Heart right ventricle (tissue), 16 donors: ENCODE measurements at regions of chr5 and their contacts with region 1.

Region 1: DNA sequence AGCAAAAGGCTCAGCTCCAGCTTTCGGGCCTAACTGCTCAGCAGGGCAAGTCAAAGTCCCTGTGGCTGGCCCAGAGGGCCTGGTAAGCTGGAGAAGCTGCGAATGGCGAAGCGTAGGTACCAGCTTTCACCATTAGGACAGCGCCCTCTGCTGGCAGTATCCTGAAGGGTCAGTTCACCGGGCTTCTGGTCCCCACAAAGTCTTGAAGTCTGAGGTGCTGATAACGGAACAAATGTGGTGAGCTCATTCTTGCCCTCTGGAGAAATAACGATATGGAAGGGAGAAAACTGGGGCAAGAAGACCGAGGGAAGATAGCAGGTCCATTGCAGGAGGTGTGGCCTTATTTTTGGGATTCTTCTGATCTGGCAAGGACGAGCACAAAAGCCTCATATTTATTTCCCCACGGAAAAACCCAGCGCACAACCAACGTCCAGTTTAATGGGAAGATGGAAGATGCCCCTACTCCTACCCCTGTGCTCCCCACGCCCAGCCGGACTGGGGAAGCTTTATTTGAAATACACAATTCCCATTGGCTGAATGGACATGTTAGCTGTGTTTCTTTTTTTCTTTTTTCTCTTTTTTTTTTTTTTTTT is 7.2 kb downstream of the SOWAHA start:
- DNase-seq: peak; percentile 88 to 91
- ATAC-seq: peak; percentile 68 to 91 (median 85)
- H3K4me3 ChIP-seq: peak overlapping the region in 2 of 10 donors; percentile 13 to 21
- H3K27ac ChIP-seq: no peak overlapping the region
- H3K4me1 ChIP-seq: peaks cover 0 to 18% (median 8%) of the 10 kb centered on the region in 9 donors
- H3K27me3 ChIP-seq: peaks cover 0 to 49% (median 3%) of the 10 kb centered on the region in 7 donors
- CTCF ChIP-seq: peak; percentile 87 to 93 (median 92)

Region 2: GRCh38 chr5:131899692-131900091 is 920.6 kb before region 1 on chr5:
- intact Hi-C with region 1: no loop called
- DNase-seq: no peak
- ATAC-seq: no peak
- H3K4me3 ChIP-seq: no peak overlapping the region
- H3K27ac ChIP-seq: no peak overlapping the region
- H3K4me1 ChIP-seq: no peaks in the 10 kb centered on the region
- H3K27me3 ChIP-seq: no peaks in the 10 kb centered on the region
- CTCF ChIP-seq: no peak

Region 3: DNA sequence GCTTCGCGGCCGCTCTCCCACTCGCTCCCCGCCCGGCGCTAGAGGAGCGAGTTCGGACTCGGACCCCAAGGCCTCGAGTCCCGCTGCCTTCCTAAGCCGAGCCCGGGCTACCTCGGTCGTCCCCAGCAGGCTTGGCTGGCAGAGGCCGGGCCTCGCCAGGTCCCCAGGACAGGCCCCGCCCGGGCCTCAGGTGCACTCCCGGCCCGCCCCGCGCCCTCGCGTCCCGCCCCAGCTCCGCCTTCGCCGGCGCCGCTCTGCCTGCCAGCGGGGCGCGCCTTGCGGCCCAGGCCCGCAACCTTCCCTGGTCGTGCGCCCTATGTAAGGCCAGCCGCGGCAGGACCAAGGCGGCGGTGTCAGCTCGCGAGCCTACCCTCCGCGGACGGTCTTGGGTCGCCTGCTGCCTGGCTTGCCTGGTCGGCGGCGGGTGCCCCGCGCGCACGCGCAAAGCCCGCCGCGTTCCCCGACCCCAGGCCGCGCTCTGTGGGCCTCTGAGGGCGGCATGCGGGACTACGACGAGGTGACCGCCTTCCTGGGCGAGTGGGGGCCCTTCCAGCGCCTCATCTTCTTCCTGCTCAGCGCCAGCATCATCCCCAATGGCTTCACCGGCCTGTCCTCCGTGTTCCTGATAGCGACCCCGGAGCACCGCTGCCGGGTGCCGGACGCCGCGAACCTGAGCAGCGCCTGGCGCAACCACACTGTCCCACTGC is 450.6 kb before region 1 on chr5 and contains the start of gene SLC22A5:
- intact Hi-C with region 1: loop called in 1 of 10 experiments (anchors 10 kb)
- DNase-seq: peak in 1 of 2 donors; percentile 73
- ATAC-seq: peak; percentile 81 to 87 (median 86)
- H3K4me3 ChIP-seq: peak within 1 kb of the TSS; percentile 51 to 82 (median 72)
- H3K27ac ChIP-seq: peak within 1 kb of the TSS; percentile 70 to 92 (median 90)
- H3K4me1 ChIP-seq: peaks cover 3 to 55% (median 21%) of the 10 kb centered on the region in 9 donors
- H3K27me3 ChIP-seq: no peaks in the 10 kb centered on the region
- CTCF ChIP-seq: no peak
- total RNA-seq, gene SLC22A5: 10.3 to 36.8 (median 12.5) TPM

Region 4: GRCh38 chr5:132526290-132526973 is 293.8 kb before region 1 on chr5:
- intact Hi-C with region 1: loop called in 6 of 10 experiments (anchors 5 to 10 kb)
- DNase-seq: peak; percentile 9 to 31
- ATAC-seq: peak; percentile 38 to 88 (median 74)
- H3K4me3 ChIP-seq: no peak overlapping the region
- H3K27ac ChIP-seq: no peak overlapping the region
- H3K4me1 ChIP-seq: peaks cover 0 to 6% (median 3%) of the 10 kb centered on the region in 9 donors
- H3K27me3 ChIP-seq: no peaks in the 10 kb centered on the region
- CTCF ChIP-seq: peak; percentile 66 to 89 (median 80)

Region 5: DNA sequence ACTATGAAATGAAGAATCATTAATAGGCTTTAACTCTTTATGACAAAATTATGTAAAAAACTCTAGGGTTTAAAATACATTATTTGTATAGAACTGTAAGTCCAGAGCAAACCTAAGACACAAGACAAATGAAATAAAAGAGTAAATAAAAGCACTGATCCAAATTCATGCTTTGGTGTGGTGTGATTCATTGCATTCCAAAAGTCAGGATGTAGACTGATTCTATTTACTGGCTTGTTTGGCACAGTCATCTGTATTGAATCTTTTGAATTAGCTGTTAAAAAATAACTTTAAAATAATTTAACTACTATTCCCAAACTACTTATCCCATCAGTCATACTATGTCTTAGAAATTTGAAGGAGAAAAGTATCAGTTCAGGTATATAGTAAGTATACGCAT is 115.4 kb before region 1 on chr5:
- intact Hi-C with region 1: no loop called
- DNase-seq: no peak
- ATAC-seq: no peak
- H3K4me3 ChIP-seq: no peak overlapping the region
- H3K27ac ChIP-seq: no peak overlapping the region
- H3K4me1 ChIP-seq: no peaks in the 10 kb centered on the region
- H3K27me3 ChIP-seq: no peaks in the 10 kb centered on the region
- CTCF ChIP-seq: no peak

Region 6: DNA sequence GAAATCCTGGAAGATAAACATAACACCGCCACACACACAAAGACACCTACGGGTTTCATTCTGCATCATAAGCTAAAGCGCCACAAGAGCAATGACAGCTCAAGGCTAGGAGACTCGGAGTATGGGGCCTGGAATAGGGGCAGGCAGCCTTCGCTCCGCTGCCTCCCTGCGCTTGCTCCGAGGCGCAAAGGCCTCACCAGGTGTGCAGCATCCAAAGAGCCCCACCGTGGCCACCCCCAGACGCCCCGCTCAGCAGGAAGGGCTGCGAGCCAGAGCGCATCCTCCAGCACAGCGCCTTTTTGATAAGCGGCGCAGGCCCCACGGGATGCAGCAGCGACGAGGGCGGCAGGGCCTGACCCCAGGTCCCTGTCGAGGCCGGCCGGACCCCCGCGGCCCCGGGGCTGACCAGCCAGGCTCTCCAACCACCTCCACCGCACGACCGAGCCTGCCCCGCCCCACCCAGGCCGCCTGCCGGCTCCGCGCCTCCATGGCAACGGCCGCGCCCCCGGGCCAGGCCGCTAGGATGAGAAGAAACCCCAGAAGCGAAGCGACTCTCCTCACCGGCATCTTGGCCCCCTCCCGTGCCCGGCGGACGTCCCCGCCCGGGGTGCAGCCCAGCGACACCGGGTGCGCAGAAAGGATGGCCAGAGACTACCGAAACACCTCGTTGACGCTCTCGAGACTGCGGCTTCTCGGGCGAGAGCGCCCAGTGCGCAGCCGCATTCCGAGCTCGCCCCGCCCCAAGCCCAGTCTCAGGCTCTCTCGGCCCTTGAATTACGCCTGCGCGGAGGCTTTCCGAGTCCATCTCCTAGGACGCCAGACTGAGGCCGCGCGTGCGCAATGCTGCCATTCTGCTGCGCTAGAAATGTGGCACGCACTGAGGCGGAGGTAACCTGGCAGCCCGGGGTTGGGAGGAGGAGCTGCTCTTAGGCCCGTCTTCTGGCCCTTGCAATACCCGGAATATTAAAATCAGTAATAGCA is 83.1 kb before region 1 on chr5 and contains the start of gene KIF3A:
- intact Hi-C with region 1: loop called in 1 of 10 experiments (anchors 5 kb)
- DNase-seq: peak; percentile 95 to 99
- ATAC-seq: peak; percentile 99 to 100 (median 100)
- H3K4me3 ChIP-seq: peak within 1 kb of the TSS; percentile 63 to 99 (median 84)
- H3K27ac ChIP-seq: peak within 1 kb of the TSS in 9 of 10 donors; percentile 50 to 82 (median 72)
- H3K4me1 ChIP-seq: peaks cover 0 to 21% (median 17%) of the 10 kb centered on the region in 9 donors
- H3K27me3 ChIP-seq: peaks cover 0 to 11% (median 0%) of the 10 kb centered on the region in 7 donors
- CTCF ChIP-seq: peak in 2 of 9 donors; percentile 26 to 35
- total RNA-seq, gene KIF3A: 10.1 to 18.6 (median 13.1) TPM

Region 7: GRCh38 chr5:132746954-132747615 is 73.2 kb before region 1 on chr5 and contains the start of gene CCNI2:
- intact Hi-C with region 1: loop called in 5 of 10 experiments (anchors 5 to 10 kb)
- DNase-seq: peak in 1 of 2 donors; percentile 37
- ATAC-seq: peak; percentile 15 to 76 (median 54)
- H3K4me3 ChIP-seq: peak within 1 kb of the TSS; percentile 1 to 58 (median 52)
- H3K27ac ChIP-seq: peak within 1 kb of the TSS in 1 of 10 donors; percentile 33
- H3K4me1 ChIP-seq: peaks cover 4 to 14% (median 9%) of the 10 kb centered on the region in 9 donors
- H3K27me3 ChIP-seq: peaks cover 0 to 62% (median 33%) of the 10 kb centered on the region in 7 donors
- CTCF ChIP-seq: peak in 6 of 9 donors; percentile 10 to 42 (median 26)
- total RNA-seq, gene CCNI2: 0.09 to 0.75 (median 0.22) TPM in 4 of 10 donors, not detected in the others

Region 8: GRCh38 chr5:132753135-132753987 is 66.9 kb before region 1 on chr5:
- intact Hi-C with region 1: loop called in 9 of 10 experiments (anchors 5 to 10 kb)
- DNase-seq: no peak
- ATAC-seq: peak in 3 of 8 donors; percentile 6 to 41 (median 21)
- H3K4me3 ChIP-seq: no peak overlapping the region
- H3K27ac ChIP-seq: no peak overlapping the region
- H3K4me1 ChIP-seq: no peaks in the 10 kb centered on the region
- H3K27me3 ChIP-seq: peaks cover 0 to 3% (median 0%) of the 10 kb centered on the region in 7 donors
- CTCF ChIP-seq: peak in 3 of 9 donors; percentile 4 to 16 (median 10)

Region 9: GRCh38 chr5:132771503-132771998 is 48.7 kb before region 1 on chr5:
- intact Hi-C with region 1: loop called in 1 of 10 experiments (anchors 5 kb)
- DNase-seq: peak; percentile 43 to 63
- ATAC-seq: peak; percentile 42 to 72 (median 58)
- H3K4me3 ChIP-seq: no peak overlapping the region
- H3K27ac ChIP-seq: peak overlapping the region in 9 of 10 donors; percentile 13 to 91 (median 74)
- H3K4me1 ChIP-seq: peaks cover 25 to 96% (median 81%) of the 10 kb centered on the region in 9 donors
- H3K27me3 ChIP-seq: peaks cover 0 to 5% (median 0%) of the 10 kb centered on the region in 7 donors
- CTCF ChIP-seq: no peak